A549 (cell line): ENCODE measurements at regions of chr7 and their contacts with region 1.

Region 1: GRCh38 chr7:40151504-40151903 is 16.7 kb downstream of the SUGCT start:
- DNase-seq: no peak
- ATAC-seq: no peak; a peak in 1 of 6 replicates
- H3K4me3 ChIP-seq: no peak overlapping the region
- H3K27ac ChIP-seq: no peak overlapping the region
- H3K4me1 ChIP-seq: no peaks in the 10 kb centered on the region
- CTCF ChIP-seq: no peak
- EP300 ChIP-seq: no peak
- POLR2A ChIP-seq: no peak
- RAD21 ChIP-seq: no peak

Region 2: GRCh38 chr7:40093631-40094350 is 57.7 kb before region 1 on chr7:
- CTCF ChIA-PET with region 1: no interaction called
- POLR2A ChIA-PET with region 1: no interaction called
- DNase-seq: no peak
- ATAC-seq: no peak
- H3K4me3 ChIP-seq: no peak overlapping the region
- H3K27ac ChIP-seq: no peak overlapping the region
- H3K4me1 ChIP-seq: no peaks in the 10 kb centered on the region
- CTCF ChIP-seq: no peak
- EP300 ChIP-seq: no peak
- POLR2A ChIP-seq: no peak
- RAD21 ChIP-seq: no peak

Region 3: DNA sequence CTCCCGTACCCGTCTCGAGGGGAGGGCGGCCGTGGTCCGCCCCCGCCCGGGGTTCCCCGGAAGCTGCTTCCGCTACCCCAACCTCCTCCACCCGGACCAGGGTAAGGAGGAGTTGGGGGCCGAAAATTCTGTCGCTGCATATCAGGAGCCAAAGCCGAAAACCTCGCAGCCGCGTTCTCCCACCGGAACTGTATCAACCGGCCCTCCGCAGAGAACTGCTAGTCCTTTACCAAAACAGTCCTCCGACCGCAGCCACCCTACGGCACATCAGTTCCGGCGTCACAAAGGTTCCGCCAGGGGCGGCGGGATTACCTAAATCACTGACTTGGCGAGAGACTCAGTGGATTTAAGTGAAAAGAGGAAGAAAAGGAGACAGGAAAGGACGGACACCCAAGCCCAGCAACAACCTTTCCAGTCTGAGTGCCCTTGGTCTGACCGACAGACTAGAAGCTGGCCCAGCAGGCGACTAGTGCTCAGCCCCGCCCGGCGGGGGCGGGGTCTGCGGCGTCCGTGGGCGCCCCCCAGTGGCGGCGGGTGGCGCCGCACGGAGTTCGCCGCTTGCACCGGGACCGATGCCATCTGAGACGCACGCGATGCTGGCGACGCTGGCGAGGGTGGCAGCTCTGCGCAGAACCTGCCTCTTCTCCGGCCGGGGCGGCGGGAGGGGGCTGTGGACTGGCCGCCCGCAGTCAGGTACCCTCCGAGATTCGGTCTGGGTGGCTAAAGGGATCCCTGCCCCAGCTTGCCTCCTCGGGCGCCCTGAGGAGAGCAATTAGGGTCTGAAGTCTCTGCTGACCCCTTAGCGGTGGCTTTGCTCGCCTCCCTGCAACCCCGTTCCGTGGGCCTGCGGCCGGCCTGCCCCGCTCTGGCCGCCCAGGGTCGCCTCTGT is 16.8 kb before region 1 on chr7 and contains the starts of genes MPLKIP and SUGCT:
- CTCF ChIA-PET with region 1: interaction called, 11 read pairs
- POLR2A ChIA-PET with region 1: no interaction called
- DNase-seq: peak; percentile 82 to 90
- ATAC-seq: peak; percentile 91 to 93
- H3K4me3 ChIP-seq: peak within 1 kb of the TSS; percentile 94
- H3K27ac ChIP-seq: peak within 1 kb of the TSS; percentile 83 to 91
- H3K4me1 ChIP-seq: peaks cover 13% of the 10 kb centered on the region; the same call in 2 of the 3 replicates
- CTCF ChIP-seq: peak; percentile 95
- EP300 ChIP-seq: no peak
- POLR2A ChIP-seq: peak; percentile 62
- RAD21 ChIP-seq: peak; percentile 8 to 50; a peak in 3 of 5 replicates
- polyA plus RNA-seq, gene MPLKIP: 27.7 and 46.0 TPM in 2 replicates
- polyA plus RNA-seq, gene SUGCT: 1.4 and 1.6 TPM in 2 replicates